ENCODE measurements at regions of chr6 and their contacts with region 1.

Region 1: DNA sequence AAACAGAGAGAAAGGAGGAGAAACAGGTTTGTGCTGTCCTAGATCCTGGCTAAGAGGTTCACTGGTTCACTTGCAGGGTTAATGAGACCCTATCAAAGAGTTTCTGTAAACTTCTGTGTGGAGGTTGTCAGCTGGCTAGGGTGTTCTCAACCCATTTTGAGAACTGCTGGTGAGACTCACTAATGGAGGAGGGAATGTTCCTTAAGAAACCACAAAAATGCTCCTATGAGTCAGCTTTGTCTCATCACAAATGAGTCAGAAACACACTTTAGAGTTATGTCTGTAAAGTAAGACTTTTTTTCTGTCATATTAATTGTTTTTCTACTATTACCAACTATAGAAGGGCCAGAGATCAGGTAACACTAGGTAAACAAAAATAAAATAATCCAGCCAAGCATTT is 884.4 kb downstream of the PHF3 start:
- DNase-seq: peak; percentile 85
- H3K4me3 ChIP-seq: no peak overlapping the region
- H3K27ac ChIP-seq: peak overlapping the region; percentile 5
- H3K4me1 ChIP-seq: peaks cover 14% of the 10 kb centered on the region
- H3K27me3 ChIP-seq: no peaks in the 10 kb centered on the region
- CTCF ChIP-seq: no peak

Region 2: GRCh38 chr6:64580346-64580745 is 60.3 kb after region 1 on chr6:
- CTCF ChIA-PET with region 1: no interaction called
- dilution Hi-C with region 1: no loop called
- in situ Hi-C with region 1: no loop called
- intact Hi-C with region 1: loop called (anchors 5 kb)
- DNase-seq: peak; percentile 62
- H3K4me3 ChIP-seq: no peak overlapping the region
- H3K27ac ChIP-seq: no peak overlapping the region
- H3K4me1 ChIP-seq: no peaks in the 10 kb centered on the region
- H3K27me3 ChIP-seq: no peaks in the 10 kb centered on the region
- CTCF ChIP-seq: no peak